Activated naive CD4-positive, alpha-beta T cell treated with anti-CD3 and anti-CD28 coated beads, Interleukin-2, amount 10 ng/mL, durations not matched to agents 7 days and 5 days (primary cell): ENCODE measurements at regions of chr10 and their contacts with region 1.

Region 1: GRCh38 chr10:70558871-70559810 is 43.4 kb downstream of the PRF1 start:
- DNase-seq: peak; percentile 77
- H3K4me3 Mint-ChIP-seq: peak overlapping the region; percentile 66
- H3K27ac Mint-ChIP-seq: no peak overlapping the region
- H3K4me1 Mint-ChIP-seq: peaks cover 19% of the 10 kb centered on the region
- H3K27me3 Mint-ChIP-seq: peaks cover 45% of the 10 kb centered on the region

Region 2: DNA sequence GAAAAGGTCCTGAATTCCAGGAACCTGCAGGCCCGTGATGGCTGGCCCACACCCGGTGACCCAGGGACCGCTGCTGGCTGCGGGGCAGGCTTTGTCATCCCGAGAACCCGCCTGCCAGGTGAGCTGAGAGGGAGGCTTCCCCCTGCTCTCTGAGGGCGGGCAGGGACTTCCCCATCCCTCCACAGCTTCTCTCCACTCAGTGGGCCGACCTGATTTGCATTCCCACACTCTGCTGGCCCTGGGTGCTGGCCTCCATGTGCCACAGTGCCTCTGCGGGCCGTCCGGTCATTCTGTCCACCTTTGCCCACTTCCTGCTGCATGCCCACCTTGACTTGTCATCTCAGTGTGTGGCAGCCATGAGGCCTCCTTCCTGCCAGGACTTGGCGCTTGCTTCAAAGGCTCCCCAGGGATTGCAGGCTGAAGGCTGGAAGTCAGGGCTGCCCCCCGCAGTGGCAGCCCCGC is 45.3 kb before region 1 on chr10:
- CTCF ChIA-PET with region 1: no interaction called
- DNase-seq: no peak
- H3K4me3 Mint-ChIP-seq: no peak overlapping the region
- H3K27ac Mint-ChIP-seq: no peak overlapping the region
- H3K4me1 Mint-ChIP-seq: no peaks in the 10 kb centered on the region
- H3K27me3 Mint-ChIP-seq: peaks cover 40% of the 10 kb centered on the region

Region 3: DNA sequence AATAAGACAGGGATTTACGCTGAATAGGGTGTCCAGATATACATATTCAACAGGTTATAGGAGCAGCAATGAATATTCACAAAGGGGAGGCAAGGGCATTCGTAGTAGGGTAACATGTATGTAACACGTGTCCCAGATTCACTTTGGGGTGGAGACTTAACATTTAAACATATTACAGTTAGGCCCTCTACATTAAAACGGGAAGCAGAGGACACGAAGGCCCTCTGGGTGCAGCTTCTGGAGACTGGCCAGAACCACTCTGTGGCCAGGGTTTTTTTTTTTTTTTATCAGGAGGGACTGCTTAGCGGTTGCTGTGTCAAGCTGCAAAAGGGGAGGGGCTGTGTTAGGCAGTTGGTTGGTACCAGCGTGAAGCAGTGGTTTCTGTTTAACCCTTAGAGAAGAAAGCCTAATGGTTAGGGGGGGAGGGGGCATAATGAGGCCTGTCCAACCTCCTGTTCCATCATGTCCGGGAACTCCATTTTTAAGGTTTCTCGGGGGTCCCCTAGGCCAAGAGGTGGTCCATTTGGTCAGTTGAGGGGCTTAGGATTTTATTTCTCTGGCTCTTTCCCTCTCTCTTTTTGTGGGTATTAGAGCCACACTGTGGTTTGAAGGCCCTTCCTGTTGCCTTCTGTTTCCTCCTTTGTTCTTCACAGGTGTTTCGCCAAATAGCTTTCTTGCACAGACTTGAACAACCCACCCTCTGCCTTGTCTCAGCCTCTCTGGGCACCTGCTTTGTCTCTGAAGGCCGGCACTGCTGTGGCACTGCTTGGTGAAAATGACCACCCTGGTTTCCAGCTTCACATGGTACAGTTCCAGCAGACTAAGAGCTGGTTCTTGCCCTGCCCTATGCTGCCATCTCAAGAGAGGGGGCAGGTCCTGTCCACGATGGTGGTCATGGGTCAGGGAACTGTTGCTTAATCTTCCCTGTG is 17.0 kb after region 1 on chr10:
- CTCF ChIA-PET with region 1: interaction called, 12 read pairs
- DNase-seq: no peak
- H3K4me3 Mint-ChIP-seq: no peak overlapping the region
- H3K27ac Mint-ChIP-seq: peak overlapping the region; percentile 29
- H3K4me1 Mint-ChIP-seq: peaks cover 49% of the 10 kb centered on the region
- H3K27me3 Mint-ChIP-seq: peaks cover 41% of the 10 kb centered on the region

Region 4: DNA sequence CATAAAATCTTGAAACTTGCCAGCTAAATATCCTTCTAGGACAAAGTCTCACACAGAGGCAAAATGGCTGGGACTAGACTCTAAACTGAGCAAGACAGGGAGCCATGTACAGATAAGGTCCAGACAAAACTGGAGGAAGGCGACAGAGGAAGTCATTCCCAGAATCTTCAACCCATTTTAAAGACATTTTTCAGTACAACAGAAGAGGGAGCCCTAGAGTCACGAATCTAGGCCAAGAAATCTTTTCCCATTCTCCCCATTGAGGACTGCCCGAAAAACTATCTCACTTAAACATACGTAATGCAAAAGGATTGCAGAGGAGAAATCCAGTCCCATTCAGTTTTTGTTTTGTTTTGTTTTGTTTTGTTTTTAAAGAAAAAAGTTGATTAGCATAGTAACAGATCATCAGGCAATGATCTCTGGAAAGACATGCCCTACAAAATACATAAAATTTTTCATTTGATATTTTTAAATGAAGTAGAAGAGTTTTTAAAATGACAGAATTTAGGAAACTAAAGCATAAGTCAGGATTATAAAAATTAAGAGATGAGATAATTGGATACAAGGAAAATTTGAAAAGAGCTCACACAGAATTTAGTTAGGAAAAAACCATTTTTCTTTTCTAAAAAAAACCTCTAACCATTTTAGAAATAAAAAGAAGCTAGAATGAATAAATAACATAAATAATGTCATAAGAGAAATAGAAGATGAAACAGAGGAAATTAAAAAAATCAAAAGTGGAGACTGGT is 60.3 kb after region 1 on chr10:
- CTCF ChIA-PET with region 1: interaction called, 19 read pairs
- DNase-seq: no peak
- H3K4me3 Mint-ChIP-seq: no peak overlapping the region
- H3K27ac Mint-ChIP-seq: no peak overlapping the region
- H3K4me1 Mint-ChIP-seq: peaks cover 7% of the 10 kb centered on the region
- H3K27me3 Mint-ChIP-seq: peaks cover 20% of the 10 kb centered on the region

Region 5: GRCh38 chr10:70758757-70759514 is 199.8 kb after region 1 on chr10:
- CTCF ChIA-PET with region 1: interaction called, 71 read pairs
- DNase-seq: peak; percentile 78
- H3K4me3 Mint-ChIP-seq: no peak overlapping the region
- H3K27ac Mint-ChIP-seq: no peak overlapping the region
- H3K4me1 Mint-ChIP-seq: no peaks in the 10 kb centered on the region
- H3K27me3 Mint-ChIP-seq: peaks cover 32% of the 10 kb centered on the region